Colonic mucosa (tissue), 4 donors: ENCODE measurements at regions of chr2 and their contacts with region 1.

Region 1: GRCh38 chr2:216119986-216120385 is 10.8 kb downstream of the XRCC5 start:
- DNase-seq: no peak
- H3K4me3 ChIP-seq: no peak overlapping the region
- H3K27ac ChIP-seq: no peak overlapping the region
- H3K4me1 ChIP-seq: no peaks in the 10 kb centered on the region
- H3K27me3 ChIP-seq: no peaks in the 10 kb centered on the region
- CTCF ChIP-seq: no peak

Region 2: DNA sequence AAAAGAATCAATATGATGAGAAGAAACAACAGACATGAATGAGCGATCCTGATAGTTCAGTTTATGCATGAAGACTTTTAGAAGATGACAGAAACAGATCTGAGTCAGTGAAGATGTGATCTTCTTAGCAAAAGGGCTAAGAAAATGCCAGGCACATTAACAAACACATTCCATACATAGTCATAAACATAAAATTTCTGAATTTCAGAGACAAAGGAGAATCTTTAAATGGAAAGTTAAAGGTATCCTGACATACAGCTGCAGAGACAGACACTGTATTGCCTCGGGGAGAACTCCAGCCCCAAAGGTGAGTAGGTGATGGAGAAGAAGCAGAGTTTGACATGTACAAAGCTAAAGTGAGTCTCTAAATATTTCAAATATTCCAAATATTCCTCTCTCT is 643.6 kb before region 1 on chr2:
- intact Hi-C with region 1: no loop called
- DNase-seq: no peak
- H3K4me3 ChIP-seq: no peak overlapping the region
- H3K27ac ChIP-seq: no peak overlapping the region
- H3K4me1 ChIP-seq: no peaks in the 10 kb centered on the region
- H3K27me3 ChIP-seq: no peaks in the 10 kb centered on the region
- CTCF ChIP-seq: no peak

Region 3: DNA sequence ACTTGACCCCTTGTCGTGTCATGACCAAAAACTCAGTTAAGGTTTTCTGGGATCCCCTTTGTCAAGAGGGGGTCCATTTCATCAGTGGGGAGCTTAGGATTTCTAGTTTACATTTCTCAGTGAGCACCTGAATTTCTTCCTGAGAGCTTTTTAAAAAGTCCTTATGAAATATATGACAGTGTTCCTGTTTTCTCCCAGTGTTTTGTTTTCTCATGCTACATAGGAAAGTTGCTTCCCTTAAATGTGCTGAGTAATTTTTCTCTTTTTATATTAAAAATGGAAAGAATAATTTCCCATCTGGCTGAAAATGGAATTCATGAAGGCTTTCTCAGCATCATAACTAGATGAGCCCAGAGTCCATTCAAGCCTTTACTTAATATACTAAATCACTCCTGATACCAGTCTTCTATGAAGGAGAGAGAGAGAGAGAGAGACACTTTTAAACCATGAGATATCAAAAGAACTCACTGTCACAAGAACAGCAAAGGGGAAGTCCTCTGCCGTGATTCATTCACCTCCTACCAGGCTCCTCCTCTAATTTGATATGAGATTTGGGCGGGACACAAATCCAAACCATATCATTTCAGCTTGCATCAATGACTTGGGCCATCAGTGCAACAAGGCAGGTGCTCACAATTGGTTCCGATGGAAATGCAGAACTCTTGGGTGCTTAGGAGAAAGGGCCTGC is 50.2 kb after region 1 on chr2:
- intact Hi-C with region 1: loop called (anchors 10 kb)
- DNase-seq: no peak
- H3K4me3 ChIP-seq: no peak overlapping the region
- H3K27ac ChIP-seq: no peak overlapping the region
- H3K4me1 ChIP-seq: no peaks in the 10 kb centered on the region
- H3K27me3 ChIP-seq: no peaks in the 10 kb centered on the region
- CTCF ChIP-seq: no peak

Region 4: GRCh38 chr2:216339808-216340631 is 220.0 kb after region 1 on chr2:
- intact Hi-C with region 1: no loop called
- DNase-seq: peak; percentile 21
- H3K4me3 ChIP-seq: no peak overlapping the region
- H3K27ac ChIP-seq: no peak overlapping the region
- H3K4me1 ChIP-seq: no peaks in the 10 kb centered on the region
- H3K27me3 ChIP-seq: no peaks in the 10 kb centered on the region
- CTCF ChIP-seq: no peak